Panc1 (cell line): ENCODE measurements at regions of chr19 and their contacts with region 1.

Region 1: DNA sequence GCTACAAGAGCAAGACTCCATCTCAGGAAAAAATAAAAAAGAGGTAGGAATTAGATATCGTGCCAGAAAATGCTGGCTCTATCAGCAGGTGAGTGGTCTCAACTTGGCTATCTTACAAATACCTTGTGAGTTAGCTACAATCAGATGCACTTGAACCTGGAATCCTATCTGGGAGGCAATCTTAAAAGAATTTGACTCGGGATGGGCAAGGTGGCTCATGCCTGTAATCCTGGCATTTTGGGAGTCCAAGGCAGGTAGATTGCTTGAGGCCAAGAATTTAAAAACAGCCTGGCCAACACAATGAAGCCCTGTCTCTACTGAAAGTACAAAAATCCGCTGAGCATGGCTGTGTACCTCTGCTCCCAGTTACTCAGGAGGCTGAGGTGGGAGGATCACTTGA is 29.4 kb downstream of the NLRP2 start:
- DNase-seq: no peak
- ATAC-seq: no peak
- H3K4me3 ChIP-seq: no peak overlapping the region
- H3K27ac ChIP-seq: no peak overlapping the region
- H3K4me1 ChIP-seq: no peaks in the 10 kb centered on the region
- H3K27me3 ChIP-seq: no peaks in the 10 kb centered on the region
- CTCF ChIP-seq: no peak

Region 2: GRCh38 chr19:53455828-53456227 is 1539.7 kb before region 1 on chr19:
- CTCF ChIA-PET with region 1: no interaction called
- POLR2A ChIA-PET with region 1: no interaction called
- in situ Hi-C with region 1: no loop called
- intact Hi-C with region 1: no loop called
- DNase-seq: no peak
- ATAC-seq: no peak
- H3K4me3 ChIP-seq: no peak overlapping the region
- H3K27ac ChIP-seq: no peak overlapping the region
- H3K4me1 ChIP-seq: no peaks in the 10 kb centered on the region
- H3K27me3 ChIP-seq: no peaks in the 10 kb centered on the region
- CTCF ChIP-seq: no peak

Region 3: GRCh38 chr19:54928299-54928698 is 67.3 kb before region 1 on chr19:
- CTCF ChIA-PET with region 1: no interaction called
- POLR2A ChIA-PET with region 1: no interaction called
- in situ Hi-C with region 1: loop called (anchors 10 kb)
- intact Hi-C with region 1: no loop called
- DNase-seq: no peak
- ATAC-seq: no peak
- H3K4me3 ChIP-seq: no peak overlapping the region
- H3K27ac ChIP-seq: no peak overlapping the region
- H3K4me1 ChIP-seq: no peaks in the 10 kb centered on the region
- H3K27me3 ChIP-seq: no peaks in the 10 kb centered on the region
- CTCF ChIP-seq: no peak

Region 4: GRCh38 chr19:55005684-55006488 is 10.3 kb after region 1 on chr19:
- CTCF ChIA-PET with region 1: no interaction called
- POLR2A ChIA-PET with region 1: no interaction called
- in situ Hi-C with region 1: no loop called
- intact Hi-C with region 1: no loop called
- DNase-seq: no peak
- ATAC-seq: no peak
- H3K4me3 ChIP-seq: peak overlapping the region in 1 of 2 experiments; percentile 33; a peak in 2 of 4 replicates
- H3K27ac ChIP-seq: no peak overlapping the region
- H3K4me1 ChIP-seq: no peaks in the 10 kb centered on the region
- H3K27me3 ChIP-seq: no peaks in the 10 kb centered on the region
- CTCF ChIP-seq: no peak

Region 5: GRCh38 chr19:55099533-55100506 is 104.3 kb after region 1 on chr19:
- CTCF ChIA-PET with region 1: no interaction called
- POLR2A ChIA-PET with region 1: no interaction called
- in situ Hi-C with region 1: no loop called
- intact Hi-C with region 1: no loop called
- DNase-seq: no peak
- ATAC-seq: 0 out of 2 replicates have a peak, but pooled peaks have one; percentile 26
- H3K4me3 ChIP-seq: no peak overlapping the region
- H3K27ac ChIP-seq: no peak overlapping the region
- H3K4me1 ChIP-seq: peaks cover 12% of the 10 kb centered on the region
- H3K27me3 ChIP-seq: no peaks in the 10 kb centered on the region
- CTCF ChIP-seq: no peak